ENCODE measurements at regions of chr13 and their contacts with region 1.

Region 1: DNA sequence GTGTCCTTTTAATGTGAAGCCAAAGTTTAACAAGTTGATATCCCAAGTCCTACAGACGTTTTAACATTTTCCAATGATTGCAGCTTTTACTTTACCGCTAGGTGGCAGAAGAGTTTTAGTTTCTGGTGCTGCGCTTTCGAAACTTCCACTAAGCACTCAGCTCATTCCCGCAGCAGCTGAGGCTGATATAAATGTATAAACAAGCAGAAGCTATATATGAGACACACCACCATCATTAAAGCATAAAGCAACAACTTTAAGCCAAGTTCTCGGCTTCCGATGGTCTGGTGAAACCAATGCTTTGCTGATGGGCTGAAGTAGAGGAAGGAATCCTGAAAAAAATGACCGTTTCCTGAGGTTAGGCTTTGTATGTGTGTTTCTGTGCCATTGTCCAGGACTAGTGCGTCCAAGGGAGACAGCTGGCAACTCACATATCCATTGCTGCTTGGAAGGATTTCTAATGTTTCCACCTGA is 753.9 kb downstream of the OLFM4 start:
- DNase-seq: peak; percentile 67
- ATAC-seq: peak; percentile 77
- H3K4me3 ChIP-seq: peak overlapping the region; percentile 44; the same call in 1 of the 2 replicates
- H3K27ac ChIP-seq: no peak overlapping the region
- H3K4me1 ChIP-seq: no peaks in the 10 kb centered on the region
- H3K27me3 ChIP-seq: no peaks in the 10 kb centered on the region
- CTCF ChIP-seq: peak; percentile 63

Region 2: DNA sequence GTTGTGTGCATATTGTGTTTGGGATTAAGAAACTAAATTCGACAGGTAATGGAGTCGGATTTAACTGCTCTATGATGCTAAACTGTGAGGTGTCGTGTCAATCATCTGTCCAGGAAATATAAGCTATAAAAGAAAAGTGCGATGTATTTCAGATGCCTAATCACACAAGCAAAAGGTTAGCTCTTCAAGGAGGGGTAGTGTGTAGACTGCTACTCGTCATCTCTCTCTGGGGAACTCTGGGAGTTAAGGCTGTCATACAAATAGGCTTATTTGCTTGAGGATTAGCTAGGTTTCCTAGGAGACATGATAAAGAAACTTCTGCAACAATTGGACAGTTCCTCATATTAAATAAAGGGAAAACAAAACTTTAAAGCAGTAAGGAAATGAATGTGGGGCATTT is 291.8 kb before region 1 on chr13:
- CTCF ChIA-PET with region 1: no interaction called
- POLR2A ChIA-PET with region 1: no interaction called
- intact Hi-C with region 1: no loop called
- DNase-seq: no peak
- ATAC-seq: no peak
- H3K4me3 ChIP-seq: no peak overlapping the region
- H3K27ac ChIP-seq: no peak overlapping the region
- H3K4me1 ChIP-seq: no peaks in the 10 kb centered on the region
- H3K27me3 ChIP-seq: no peaks in the 10 kb centered on the region
- CTCF ChIP-seq: no peak

Region 3: DNA sequence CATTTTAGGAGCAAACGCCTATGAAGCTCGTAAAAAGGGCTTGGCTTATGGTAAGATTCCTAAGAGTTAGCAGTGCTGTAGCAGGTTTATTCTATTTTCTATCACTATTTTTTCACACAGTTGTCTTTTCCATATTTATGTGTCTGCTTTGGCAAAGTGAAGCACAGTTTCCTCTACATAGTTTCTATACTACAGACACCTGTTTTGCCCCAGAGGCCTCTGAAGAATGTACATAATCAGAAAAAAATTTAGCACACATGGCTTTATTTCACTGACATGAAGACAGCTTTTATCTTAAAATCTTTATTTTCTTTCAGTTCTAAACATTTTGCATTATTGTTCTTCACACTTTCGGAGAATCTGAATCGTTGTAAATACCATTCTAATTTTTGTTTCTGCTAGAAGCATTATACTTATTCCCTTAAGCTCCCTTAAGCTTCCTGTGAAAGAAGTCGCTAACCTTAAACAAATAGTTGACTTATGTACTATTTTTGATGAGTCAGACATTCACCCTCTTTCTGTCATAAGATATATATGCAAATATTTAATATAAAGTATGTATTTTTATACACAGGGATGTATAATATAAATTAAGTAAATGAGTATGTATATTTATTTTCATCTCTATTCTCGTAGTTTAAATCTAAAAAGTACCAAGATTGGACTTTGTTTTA is 62.1 kb after region 1 on chr13:
- CTCF ChIA-PET with region 1: no interaction called
- POLR2A ChIA-PET with region 1: no interaction called
- intact Hi-C with region 1: loop called (anchors 1 kb)
- DNase-seq: no peak
- ATAC-seq: peak; percentile 75
- H3K4me3 ChIP-seq: no peak overlapping the region
- H3K27ac ChIP-seq: no peak overlapping the region
- H3K4me1 ChIP-seq: no peaks in the 10 kb centered on the region
- H3K27me3 ChIP-seq: no peaks in the 10 kb centered on the region
- CTCF ChIP-seq: no peak

Region 4: GRCh38 chr13:53873558-53873957 is 91.0 kb after region 1 on chr13:
- CTCF ChIA-PET with region 1: no interaction called
- POLR2A ChIA-PET with region 1: no interaction called
- intact Hi-C with region 1: no loop called
- DNase-seq: no peak
- ATAC-seq: no peak
- H3K4me3 ChIP-seq: no peak overlapping the region
- H3K27ac ChIP-seq: no peak overlapping the region
- H3K4me1 ChIP-seq: no peaks in the 10 kb centered on the region
- H3K27me3 ChIP-seq: no peaks in the 10 kb centered on the region
- CTCF ChIP-seq: no peak

Region 5: GRCh38 chr13:54078271-54078870 is 295.8 kb after region 1 on chr13:
- CTCF ChIA-PET with region 1: no interaction called
- POLR2A ChIA-PET with region 1: no interaction called
- intact Hi-C with region 1: loop called (anchors 10 kb)
- DNase-seq: no peak
- ATAC-seq: no peak
- H3K4me3 ChIP-seq: no peak overlapping the region
- H3K27ac ChIP-seq: no peak overlapping the region
- H3K4me1 ChIP-seq: no peaks in the 10 kb centered on the region
- H3K27me3 ChIP-seq: no peaks in the 10 kb centered on the region
- CTCF ChIP-seq: no peak

Region 6: DNA sequence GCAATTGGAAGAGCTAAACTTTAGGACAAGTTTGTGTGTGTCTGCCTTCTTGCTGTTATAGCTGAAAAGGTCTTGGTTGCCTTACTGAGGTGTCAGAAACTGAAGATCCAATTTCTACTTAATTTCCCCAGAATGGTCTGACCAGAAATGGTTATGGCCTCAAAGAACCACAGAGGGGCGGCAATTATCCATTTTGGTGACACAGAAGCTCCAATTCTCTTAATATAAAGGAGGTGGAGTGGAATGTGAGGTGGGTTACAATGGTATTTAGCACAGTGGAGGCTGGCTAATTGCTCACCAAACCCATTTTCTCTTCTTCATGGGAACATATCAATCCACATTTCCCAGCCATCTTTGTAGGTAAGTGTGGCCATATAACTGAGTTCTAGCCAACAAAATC is 403.3 kb after region 1 on chr13:
- CTCF ChIA-PET with region 1: interaction called, 4 read pairs
- POLR2A ChIA-PET with region 1: no interaction called
- intact Hi-C with region 1: loop called (anchors 1 kb)
- DNase-seq: peak; percentile 25
- ATAC-seq: peak; percentile 38; the same call in 1 of the 2 replicates
- H3K4me3 ChIP-seq: no peak overlapping the region
- H3K27ac ChIP-seq: no peak overlapping the region
- H3K4me1 ChIP-seq: no peaks in the 10 kb centered on the region
- H3K27me3 ChIP-seq: no peaks in the 10 kb centered on the region
- CTCF ChIP-seq: peak; percentile 43; the same call in 1 of the 2 replicates